Aorta (tissue), 5 donors: ENCODE measurements at regions of chr6 and their contacts with region 1.

Region 1: DNA sequence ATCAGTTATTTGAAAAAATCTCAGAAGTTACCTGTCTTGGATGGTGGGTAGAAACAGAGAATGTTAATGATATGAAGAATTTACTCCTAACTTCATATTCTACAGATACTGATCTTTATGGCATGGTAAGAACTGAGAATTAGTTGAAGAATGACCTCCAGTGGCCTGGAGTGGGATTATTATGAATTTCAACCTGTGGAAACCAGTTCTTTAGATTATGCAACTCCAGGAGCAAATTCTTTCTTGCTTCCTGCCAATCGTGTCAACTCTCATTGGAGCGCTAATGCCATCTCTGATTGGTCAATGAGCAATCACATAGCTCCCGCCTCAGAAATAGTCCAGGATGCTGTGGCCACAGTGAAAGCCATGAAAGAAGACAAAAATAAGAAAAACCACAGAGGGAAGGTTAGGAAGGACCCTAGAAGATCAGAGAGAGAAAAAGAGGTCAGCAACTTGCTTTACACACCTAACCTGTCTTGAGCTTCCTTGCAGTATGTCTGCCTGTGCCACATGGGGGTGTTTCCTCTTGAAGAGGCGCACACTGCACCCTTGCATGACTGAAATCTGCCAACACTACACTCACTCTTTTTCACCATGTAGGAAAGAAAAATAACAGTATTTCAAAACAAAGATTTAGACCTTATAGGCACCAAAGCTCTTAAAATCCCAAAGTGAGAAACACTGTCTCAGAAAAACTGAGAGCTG is 40.4 kb downstream of the LYRM2 start:
- DNase-seq: no peak
- ATAC-seq: no peak
- H3K4me3 ChIP-seq: no peak overlapping the region
- H3K27ac ChIP-seq: peak overlapping the region in 1 of 2 donors; percentile 16
- H3K4me1 ChIP-seq: no peaks in the 10 kb centered on the region
- H3K27me3 ChIP-seq: no peaks in the 10 kb centered on the region

Region 2: GRCh38 chr6:89432875-89433251 is 165.3 kb before region 1 on chr6 and contains the start of gene ANKRD6:
- intact Hi-C with region 1: loop called (anchors 2 to 5 kb)
- DNase-seq: peak; percentile 78 to 94
- ATAC-seq: peak; percentile 97
- H3K4me3 ChIP-seq: peak within 1 kb of the TSS; percentile 77 to 84
- H3K27ac ChIP-seq: peak within 1 kb of the TSS in 1 of 2 donors; percentile 60
- H3K4me1 ChIP-seq: peaks cover 1 to 5% of the 10 kb centered on the region in 2 donors
- H3K27me3 ChIP-seq: no peaks in the 10 kb centered on the region
- total RNA-seq, gene ANKRD6: 38.3 to 45.9 TPM

Region 3: DNA sequence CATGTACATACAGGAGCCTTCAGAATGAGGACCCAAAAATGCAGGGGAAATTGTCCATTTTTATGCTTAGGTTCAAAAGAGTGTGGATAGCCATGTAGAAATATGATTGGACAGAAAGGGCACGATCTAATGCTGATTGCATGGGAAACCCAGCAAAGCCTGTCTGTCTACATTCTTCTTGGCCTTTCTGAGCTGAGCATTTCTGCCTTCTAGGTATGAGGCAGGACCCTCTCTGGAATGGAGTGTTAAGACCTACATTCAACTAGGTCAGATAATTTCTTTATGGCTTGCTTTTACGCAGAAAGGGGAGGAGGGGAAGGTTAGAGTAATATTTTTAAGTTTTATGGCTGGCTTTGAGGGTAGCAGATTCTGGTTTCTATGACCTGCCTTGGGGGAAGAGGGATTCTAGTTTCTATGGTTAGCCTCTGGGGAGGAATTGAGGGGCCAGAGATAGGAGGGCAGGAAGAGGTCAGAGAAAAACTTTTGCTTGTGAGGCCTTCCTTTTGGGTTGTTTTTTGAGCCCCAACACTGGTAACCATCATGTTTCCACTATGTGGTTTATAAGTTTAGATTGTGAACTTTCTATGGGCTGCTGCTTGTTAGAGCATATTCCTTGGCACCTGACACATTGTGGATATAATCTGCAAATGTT is 23.1 kb before region 1 on chr6:
- intact Hi-C with region 1: no loop called
- DNase-seq: no peak
- ATAC-seq: no peak
- H3K4me3 ChIP-seq: no peak overlapping the region
- H3K27ac ChIP-seq: no peak overlapping the region
- H3K4me1 ChIP-seq: peaks cover 2 to 7% of the 10 kb centered on the region in 2 donors
- H3K27me3 ChIP-seq: no peaks in the 10 kb centered on the region